ENCODE measurements at regions of chr1 and their contacts with region 1.

Region 1: DNA sequence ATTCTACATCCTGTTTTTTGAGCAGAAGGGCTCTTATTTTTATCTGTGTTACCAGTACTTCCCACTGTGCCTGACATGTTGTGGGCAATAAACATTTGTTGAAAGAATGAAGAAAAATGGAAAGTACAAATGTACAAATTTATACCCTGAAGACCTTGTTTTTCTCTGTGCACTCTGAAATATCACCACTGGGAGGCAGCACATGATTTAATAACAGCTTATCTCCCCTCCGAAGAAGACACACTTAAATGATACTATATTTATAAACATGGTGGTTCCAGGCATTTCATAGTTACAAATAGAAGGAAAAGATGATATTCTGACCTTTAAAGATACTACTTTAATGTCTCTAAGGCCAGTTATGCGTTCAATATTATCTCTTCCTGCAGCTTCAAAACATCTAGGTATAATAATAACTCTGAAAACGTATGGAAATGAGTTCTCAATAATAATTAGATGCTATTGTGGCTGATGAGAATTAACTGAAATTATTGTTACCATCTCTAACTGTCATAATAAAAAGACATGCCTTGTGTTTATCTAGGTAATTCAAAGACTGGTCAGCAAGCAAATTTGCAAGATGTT is 12.8 kb downstream of the DYNLT5 start:
- DNase-seq: no peak

Region 2: DNA sequence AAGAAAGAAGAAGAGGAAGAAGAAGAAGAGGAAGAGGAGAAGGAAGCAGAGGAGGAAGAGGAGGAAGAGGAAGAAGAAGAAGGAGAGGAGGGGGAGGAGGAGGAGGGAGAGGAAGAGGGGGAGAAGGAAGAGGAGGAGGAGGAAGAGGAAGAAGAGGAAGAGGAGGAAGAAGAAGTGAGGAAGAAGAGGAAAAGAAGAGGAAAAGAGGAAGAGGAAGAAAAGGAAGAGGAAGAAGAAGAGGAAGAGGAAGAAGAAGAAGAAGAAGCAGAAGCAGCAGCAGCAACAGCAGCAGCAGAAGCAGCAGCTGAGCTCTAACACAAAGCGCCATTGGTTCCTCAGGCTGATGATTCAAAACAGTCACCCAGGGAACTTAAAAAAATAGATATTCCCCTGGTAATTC is 125.5 kb after region 1 on chr1:
- intact Hi-C with region 1: no loop called
- DNase-seq: no peak

Region 3: DNA sequence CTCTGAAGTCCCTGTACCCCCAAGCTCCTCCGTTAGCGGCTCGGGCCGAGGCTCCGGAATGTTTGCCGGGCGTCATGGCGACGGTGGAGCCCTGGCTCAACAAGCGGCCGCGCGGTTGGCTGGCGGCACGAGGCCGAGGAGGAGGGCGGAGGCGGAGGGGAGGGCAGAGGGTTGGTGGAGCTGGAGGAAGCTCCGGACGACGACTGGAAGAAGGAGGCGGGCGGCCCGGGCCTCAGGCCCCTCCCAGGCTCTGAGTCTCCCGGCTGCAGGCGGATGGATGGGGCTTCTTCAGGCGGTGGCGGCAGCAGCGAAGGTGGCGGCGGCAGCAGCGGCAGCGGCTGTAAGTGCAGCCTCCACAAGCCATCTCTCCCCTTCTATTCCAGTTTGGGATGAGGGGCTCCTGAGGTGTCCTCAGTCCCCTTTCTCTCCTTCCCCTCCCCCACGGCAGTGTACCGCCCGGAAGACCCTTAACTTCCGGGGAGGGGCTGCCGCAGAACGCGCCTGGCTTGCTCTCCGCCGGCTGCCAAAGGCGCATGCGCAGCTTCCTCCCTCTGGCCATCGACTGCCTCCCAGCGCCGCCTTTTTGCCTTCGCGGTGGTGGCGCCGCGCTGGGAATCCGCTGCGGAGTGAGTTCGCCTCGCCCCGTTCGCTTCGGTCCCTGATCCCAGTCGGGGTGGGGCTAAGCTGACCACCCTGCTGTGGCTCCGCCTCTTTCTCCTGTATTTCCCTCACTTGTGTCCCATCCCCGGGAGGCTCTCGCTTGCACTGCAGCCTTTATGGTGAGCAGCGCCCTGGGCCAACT is 159.9 kb after region 1 on chr1 and contains the starts of genes DNAI4 and MIER1:
- intact Hi-C with region 1: loop called (anchors 10 kb)
- DNase-seq: peak; percentile 99
- total RNA-seq, gene DNAI4: 10.9 TPM
- total RNA-seq, gene MIER1: 27.8 TPM

Region 4: GRCh38 chr1:66996018-66996682 is 231.1 kb after region 1 on chr1:
- intact Hi-C with region 1: loop called (anchors 10 kb)
- DNase-seq: no peak

Region 5: GRCh38 chr1:67149179-67149770 is 384.2 kb after region 1 on chr1:
- intact Hi-C with region 1: loop called (anchors 2 kb)
- DNase-seq: no peak

Region 6: GRCh38 chr1:67201891-67202290 is 436.8 kb after region 1 on chr1:
- intact Hi-C with region 1: loop called (anchors 10 kb)
- DNase-seq: no peak

Measured in cardiac septum (tissue), 1 donor.